ENCODE measurements at regions of chr22 and their contacts with region 1.

Region 1: GRCh38 chr22:46023558-46023981 is 46.6 kb upstream of the WNT7B start:
- DNase-seq: no peak
- H3K4me3 ChIP-seq: no peak overlapping the region
- CTCF ChIP-seq: no peak

Region 2: GRCh38 chr22:46079861-46080821 is 56.6 kb after region 1 on chr22:
- in situ Hi-C with region 1: loop called (anchors 5 kb)
- DNase-seq: no peak
- H3K4me3 ChIP-seq: peak overlapping the region; percentile 98
- CTCF ChIP-seq: no peak